Breast epithelium (tissue), 4 donors: ENCODE measurements at regions of chr5 and their contacts with region 1.

Region 1: GRCh38 chr5:82129723-82130285 is 148.3 kb downstream of the RPS23 start:
- DNase-seq: no peak
- H3K4me3 ChIP-seq: no peak overlapping the region
- H3K27ac ChIP-seq: no peak overlapping the region
- H3K4me1 ChIP-seq: no peaks in the 10 kb centered on the region
- H3K27me3 ChIP-seq: no peaks in the 10 kb centered on the region
- CTCF ChIP-seq: no peak
- POLR2A ChIP-seq: no peak

Region 2: GRCh38 chr5:81606150-81606549 is 523.7 kb before region 1 on chr5:
- intact Hi-C with region 1: loop called (anchors 5 kb)
- DNase-seq: no peak
- H3K4me3 ChIP-seq: no peak overlapping the region
- H3K27ac ChIP-seq: no peak overlapping the region
- H3K4me1 ChIP-seq: no peaks in the 10 kb centered on the region
- H3K27me3 ChIP-seq: no peaks in the 10 kb centered on the region
- CTCF ChIP-seq: no peak
- POLR2A ChIP-seq: no peak

Region 3: DNA sequence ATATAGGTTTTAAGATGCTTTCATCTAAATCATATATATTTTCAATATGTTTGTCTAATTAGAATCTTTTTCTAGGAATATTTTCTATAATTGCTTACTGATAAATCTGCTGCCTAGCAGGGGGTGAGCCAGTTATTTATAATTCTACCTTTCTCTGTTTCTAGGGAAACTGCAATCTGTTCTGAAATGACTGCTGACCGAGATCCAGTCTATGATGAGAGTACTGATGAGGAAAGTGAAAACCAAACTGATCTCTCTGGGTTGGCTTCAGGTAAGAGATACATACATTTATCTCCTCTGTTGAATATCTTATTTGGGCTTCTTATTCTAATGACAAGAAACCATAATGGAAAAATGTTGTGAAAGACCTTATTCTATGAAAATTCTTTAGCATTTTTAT is 1074.8 kb after region 1 on chr5:
- intact Hi-C with region 1: no loop called
- DNase-seq: no peak
- H3K4me3 ChIP-seq: no peak overlapping the region
- H3K27ac ChIP-seq: no peak overlapping the region
- H3K4me1 ChIP-seq: no peaks in the 10 kb centered on the region
- H3K27me3 ChIP-seq: no peaks in the 10 kb centered on the region
- CTCF ChIP-seq: no peak
- POLR2A ChIP-seq: no peak